ENCODE measurements at regions of chr4 and their contacts with region 1.

Region 1: GRCh38 chr4:38759113-38759789 is 23.5 kb downstream of the TLR10 start:
- DNase-seq: peak; percentile 25
- H3K4me3 ChIP-seq: no peak overlapping the region
- H3K27ac ChIP-seq: no peak overlapping the region
- H3K4me1 ChIP-seq: peaks cover 7% of the 10 kb centered on the region
- H3K27me3 ChIP-seq: no peaks in the 10 kb centered on the region
- CTCF ChIP-seq: peak; percentile 70

Region 2: DNA sequence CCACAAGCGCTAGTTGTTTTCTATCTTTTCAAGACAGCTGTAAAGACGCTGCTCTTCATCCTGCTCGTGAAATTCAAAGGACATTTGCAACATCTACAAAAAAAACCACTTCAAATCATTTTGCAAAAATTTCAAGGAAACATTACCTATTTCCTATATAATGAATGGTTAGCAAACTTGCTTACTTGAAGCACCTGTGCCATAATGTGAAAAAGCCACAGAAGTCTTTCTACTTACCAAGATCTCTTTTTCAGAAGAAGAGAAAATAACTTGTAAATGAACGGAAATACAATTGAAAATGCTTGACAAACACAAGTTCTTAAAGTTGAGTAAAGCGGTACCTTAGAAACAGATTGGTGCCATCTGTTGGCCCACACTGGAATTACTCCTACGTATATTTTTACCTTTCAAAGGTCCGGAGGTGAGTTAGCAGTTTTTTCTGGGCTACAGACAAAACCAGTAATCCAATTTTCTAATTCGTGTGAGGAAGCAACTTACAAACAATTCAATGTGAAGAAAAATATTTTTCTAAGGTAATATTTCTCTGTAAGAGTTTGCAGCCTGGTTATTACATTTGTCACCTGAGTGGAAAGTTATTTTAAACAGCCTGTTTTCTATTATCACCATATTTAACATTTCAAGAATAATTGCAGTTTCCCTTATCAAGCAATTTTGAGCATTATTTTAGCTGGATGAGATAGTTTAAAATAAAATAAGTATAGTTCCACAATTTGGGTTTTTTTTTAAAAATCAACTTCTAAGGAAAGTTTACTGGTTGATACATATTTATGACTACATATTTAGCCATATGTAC is 97.5 kb after region 1 on chr4 and contains the start of gene TLR6:
- intact Hi-C with region 1: loop called (anchors 10 kb)
- DNase-seq: no peak
- H3K4me3 ChIP-seq: peak within 1 kb of the TSS; percentile 30
- H3K27ac ChIP-seq: peak within 1 kb of the TSS; percentile 66
- H3K4me1 ChIP-seq: peaks cover 7% of the 10 kb centered on the region
- H3K27me3 ChIP-seq: peaks cover 7% of the 10 kb centered on the region
- CTCF ChIP-seq: peak; percentile 85
- total RNA-seq, gene TLR6: 0.71 TPM

Measured in left ventricle myocardium inferior (tissue), 1 donor.